ENCODE measurements at regions of chr18 and their contacts with region 1.

Region 1: DNA sequence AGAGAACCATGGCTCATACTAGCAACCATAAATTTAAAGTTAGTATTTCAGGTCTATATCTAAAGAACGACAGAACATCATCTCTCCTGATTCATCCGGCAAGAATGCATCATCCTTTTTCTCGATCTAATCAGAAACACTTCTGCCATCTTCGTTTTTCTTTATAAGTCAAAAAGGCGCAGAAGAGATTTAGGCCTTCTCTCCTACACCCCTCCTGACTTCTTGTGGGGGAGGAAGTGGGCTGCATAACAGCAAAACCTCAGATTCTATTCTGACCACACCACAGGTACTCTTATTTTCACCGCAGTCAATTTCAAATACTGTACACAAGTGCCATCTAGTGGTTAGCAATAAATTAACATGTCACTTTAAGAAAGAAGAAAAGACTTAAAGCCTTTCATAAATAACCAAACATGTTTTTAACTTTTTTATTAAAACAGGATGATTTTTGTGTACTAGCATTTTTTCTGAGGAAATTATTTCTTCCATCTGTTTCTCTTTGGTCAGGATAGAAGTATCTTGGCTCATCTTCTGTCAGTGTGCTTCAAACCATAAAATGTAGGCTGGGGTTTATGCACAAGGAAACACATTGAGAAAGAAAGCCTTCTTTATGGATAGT is 48.4 kb upstream of the PIK3C3 start:
- DNase-seq: peak; percentile 33
- ATAC-seq: peak; percentile 97
- H3K4me3 ChIP-seq: no peak overlapping the region
- H3K27ac ChIP-seq: no peak overlapping the region
- H3K4me1 ChIP-seq: peaks cover 5% of the 10 kb centered on the region; the same call in 1 of the 2 replicates
- H3K27me3 ChIP-seq: no peaks in the 10 kb centered on the region
- CTCF ChIP-seq: peak; percentile 47 to 70 (median 60)
- EP300 ChIP-seq: peak; percentile 39 to 64; a peak in 1 of 4 replicates
- POLR2A ChIP-seq: no peak
- RAD21 ChIP-seq: peak; percentile 83

Region 2: DNA sequence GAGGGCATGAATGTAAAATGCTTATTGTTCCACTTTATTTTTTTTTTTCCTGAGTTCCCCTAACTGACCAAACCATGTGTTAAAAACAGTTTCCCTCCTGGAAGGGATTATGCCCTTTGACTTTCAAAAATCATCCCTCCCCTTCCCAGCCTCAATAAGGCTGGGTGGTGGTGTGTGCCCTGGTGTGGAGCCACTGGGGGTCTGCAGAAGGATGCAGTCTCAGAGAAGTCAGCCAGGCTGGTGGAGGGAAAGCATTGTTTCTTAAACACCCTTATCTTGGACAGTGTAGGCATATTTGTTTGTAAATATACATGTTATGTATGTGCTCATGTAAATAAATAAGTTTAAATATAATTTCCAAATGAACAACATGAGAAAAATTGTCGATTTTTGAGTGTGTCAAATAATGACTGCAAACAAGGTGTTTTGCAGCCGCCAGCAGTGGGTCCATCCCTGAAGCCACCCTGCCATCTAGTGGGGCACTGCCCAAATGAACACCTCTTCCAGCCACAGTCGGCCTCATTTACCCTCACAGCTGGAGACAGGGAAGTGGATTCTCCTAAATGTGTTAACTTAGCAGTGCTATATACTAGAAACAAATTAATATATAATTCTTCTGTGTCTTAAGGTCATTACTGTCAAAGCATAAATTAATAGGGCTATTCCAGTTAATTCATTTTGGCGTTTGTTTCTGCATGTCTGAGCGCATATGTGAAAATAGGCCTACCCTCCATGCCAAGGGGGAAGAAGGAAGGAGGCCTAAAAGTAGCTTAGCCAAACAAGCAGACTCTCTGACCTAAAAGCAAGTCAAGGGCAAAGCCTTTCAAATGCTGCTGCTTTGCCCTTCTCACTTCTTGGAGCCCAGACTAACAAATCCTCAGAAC is 161.2 kb before region 1 on chr18:
- CTCF ChIA-PET with region 1: interaction called, 3 read pairs
- POLR2A ChIA-PET with region 1: no interaction called
- RAD21 ChIA-PET with region 1: no interaction called
- SMC1A ChIA-PET with region 1: no interaction called
- in situ Hi-C with region 1: no loop called
- intact Hi-C with region 1: loop called (anchors 5 kb)
- DNase-seq: no peak
- ATAC-seq: peak; percentile 91
- H3K4me3 ChIP-seq: no peak overlapping the region
- H3K27ac ChIP-seq: no peak overlapping the region
- H3K4me1 ChIP-seq: no peaks in the 10 kb centered on the region
- H3K27me3 ChIP-seq: no peaks in the 10 kb centered on the region
- CTCF ChIP-seq: peak; percentile 52 to 66 (median 54); a peak in 5 of 6 replicates
- EP300 ChIP-seq: no peak
- POLR2A ChIP-seq: no peak
- RAD21 ChIP-seq: peak; percentile 62

Region 3: GRCh38 chr18:41767960-41768359 is 138.7 kb before region 1 on chr18:
- CTCF ChIA-PET with region 1: no interaction called
- POLR2A ChIA-PET with region 1: no interaction called
- RAD21 ChIA-PET with region 1: no interaction called
- SMC1A ChIA-PET with region 1: no interaction called
- in situ Hi-C with region 1: no loop called
- intact Hi-C with region 1: loop called (anchors 5 kb)
- DNase-seq: no peak
- ATAC-seq: peak; percentile 55
- H3K4me3 ChIP-seq: no peak overlapping the region
- H3K27ac ChIP-seq: no peak overlapping the region
- H3K4me1 ChIP-seq: no peaks in the 10 kb centered on the region
- H3K27me3 ChIP-seq: no peaks in the 10 kb centered on the region
- CTCF ChIP-seq: no peak
- EP300 ChIP-seq: no peak
- POLR2A ChIP-seq: no peak
- RAD21 ChIP-seq: peak; percentile 31

Measured in GM12878 (cell line).